ENCODE measurements at regions of chr1 and their contacts with region 1.

Region 1: DNA sequence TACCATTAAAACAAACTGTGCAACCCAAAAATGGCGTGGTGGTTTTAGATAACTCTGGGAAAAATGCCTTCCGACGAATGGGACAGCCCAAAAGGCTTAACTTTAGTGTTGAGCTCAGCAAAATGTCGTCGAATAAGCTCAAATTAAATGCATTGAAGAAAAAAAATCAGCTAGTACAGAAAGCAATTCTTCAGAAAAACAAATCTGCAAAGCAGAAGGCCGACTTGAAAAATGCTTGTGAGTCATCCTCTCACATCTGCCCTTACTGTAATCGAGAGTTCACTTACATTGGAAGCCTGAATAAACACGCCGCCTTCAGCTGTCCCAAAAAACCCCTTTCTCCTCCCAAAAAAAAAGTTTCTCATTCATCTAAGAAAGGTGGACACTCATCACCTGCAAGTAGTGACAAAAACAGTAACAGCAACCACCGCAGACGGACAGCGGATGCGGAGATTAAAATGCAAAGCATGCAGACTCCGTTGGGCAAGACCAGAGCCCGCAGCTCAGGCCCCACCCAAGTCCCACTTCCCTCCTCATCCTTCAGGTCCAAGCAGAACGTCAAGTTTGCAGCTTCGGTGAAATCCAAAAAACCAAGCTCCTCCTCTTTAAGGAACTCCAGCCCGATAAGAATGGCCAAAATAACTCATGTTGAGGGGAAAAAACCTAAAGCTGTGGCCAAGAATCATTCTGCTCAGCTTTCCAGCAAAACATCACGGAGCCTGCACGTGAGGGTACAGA is 82.1 kb downstream of the PRDM2 start:
- DNase-seq: no peak
- H3K4me3 ChIP-seq: no peak overlapping the region
- H3K27ac ChIP-seq: no peak overlapping the region
- H3K4me1 ChIP-seq: no peaks in the 10 kb centered on the region
- H3K27me3 ChIP-seq: no peaks in the 10 kb centered on the region
- CTCF ChIP-seq: no peak
- POLR2A ChIP-seq: no peak

Region 2: GRCh38 chr1:13764588-13765332 is 17.3 kb before region 1 on chr1:
- CTCF ChIA-PET with region 1: no interaction called
- POLR2A ChIA-PET with region 1: no interaction called
- dilution Hi-C with region 1: no loop called
- intact Hi-C with region 1: no loop called
- DNase-seq: no peak
- H3K4me3 ChIP-seq: no peak overlapping the region
- H3K27ac ChIP-seq: no peak overlapping the region
- H3K4me1 ChIP-seq: no peaks in the 10 kb centered on the region
- H3K27me3 ChIP-seq: no peaks in the 10 kb centered on the region
- CTCF ChIP-seq: no peak
- POLR2A ChIP-seq: no peak

Region 3: DNA sequence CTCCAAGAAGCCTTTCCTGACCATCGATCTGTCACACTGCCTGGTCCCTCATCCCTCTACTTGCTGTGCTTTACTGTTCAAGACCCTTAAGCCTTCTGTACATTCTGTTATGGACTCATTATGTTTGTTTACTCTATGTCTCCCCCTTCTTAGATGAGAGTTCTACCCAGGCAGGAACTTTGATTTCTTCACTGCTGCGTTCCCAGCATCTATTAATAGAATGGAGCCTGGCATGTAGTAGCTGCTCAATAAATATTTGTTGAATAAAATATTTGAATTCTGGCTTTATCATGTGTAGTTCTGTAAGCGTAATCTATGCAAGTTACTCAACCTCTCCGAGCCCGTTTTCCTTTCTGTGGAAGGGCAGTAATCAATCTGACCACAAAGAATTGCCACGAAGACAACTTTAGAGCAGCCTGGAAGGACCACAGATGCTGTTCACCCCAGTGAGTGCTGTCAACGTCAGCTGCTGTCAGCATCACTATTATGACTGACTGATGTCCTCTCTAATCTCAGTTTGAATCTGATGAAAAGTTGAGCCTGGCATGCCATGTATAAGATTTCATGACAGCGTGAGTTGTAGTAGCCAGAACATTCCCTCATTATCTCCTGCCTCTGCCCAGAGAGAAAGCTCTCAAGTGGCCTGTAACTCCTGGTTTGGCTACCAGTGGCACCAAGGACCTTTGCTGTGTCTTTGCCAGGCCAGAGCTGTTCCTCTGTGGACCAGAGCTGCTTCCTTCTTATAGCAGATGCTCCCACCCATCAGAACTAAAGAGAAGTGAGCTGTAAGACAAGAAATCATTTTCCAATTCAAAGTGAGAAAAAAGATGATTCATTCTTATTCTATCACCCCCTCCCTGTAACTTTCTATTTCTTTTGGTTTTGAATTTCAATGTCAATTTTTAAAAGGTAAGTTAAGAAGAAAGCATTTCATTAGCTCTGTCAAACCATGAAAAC is 12.4 kb after region 1 on chr1:
- CTCF ChIA-PET with region 1: interaction called, 4 read pairs
- POLR2A ChIA-PET with region 1: no interaction called
- dilution Hi-C with region 1: no loop called
- intact Hi-C with region 1: loop called (anchors 2 kb)
- DNase-seq: no peak
- H3K4me3 ChIP-seq: no peak overlapping the region
- H3K27ac ChIP-seq: no peak overlapping the region
- H3K4me1 ChIP-seq: no peaks in the 10 kb centered on the region
- H3K27me3 ChIP-seq: no peaks in the 10 kb centered on the region
- CTCF ChIP-seq: no peak
- POLR2A ChIP-seq: no peak

Measured in endothelial cell of umbilical vein (primary cell).